Activated CD4-positive, alpha-beta T cell treated with anti-CD3 and anti-CD28 coated beads, Interleukin-2, amount 10 ng/mL, durations not matched to agents 24 days and 14 days (primary cell): ENCODE measurements at regions of chr10 and their contacts with region 1.

Region 1: GRCh38 chr10:3935141-3935540 is 150.1 kb upstream of the KLF6 start:
- DNase-seq: peak; percentile 93
- H3K4me3 Mint-ChIP-seq: peak overlapping the region; percentile 65
- H3K27ac Mint-ChIP-seq: peak overlapping the region; percentile 88
- H3K4me1 Mint-ChIP-seq: peaks cover 59% of the 10 kb centered on the region
- H3K27me3 Mint-ChIP-seq: no peaks in the 10 kb centered on the region

Region 2: DNA sequence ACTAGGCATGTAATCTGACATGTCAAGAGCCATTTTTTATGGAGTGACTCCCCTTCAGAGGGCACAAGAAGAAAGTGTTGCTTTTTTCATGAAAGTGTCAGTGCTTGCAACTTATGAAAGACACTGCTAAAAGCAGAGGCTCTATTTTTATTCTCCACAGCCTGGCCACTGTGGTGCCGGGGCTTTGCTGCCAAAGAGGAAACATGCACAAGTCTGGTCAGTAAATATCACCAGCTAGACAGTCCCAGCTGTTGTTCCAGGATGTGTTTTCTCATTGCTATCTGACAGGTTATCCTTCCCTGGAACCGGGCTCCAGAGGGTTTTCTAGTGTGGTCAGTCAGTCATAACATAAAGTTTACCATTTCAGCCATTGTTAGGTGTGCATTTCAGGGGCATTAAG is 581.9 kb before region 1 on chr10:
- intact Hi-C with region 1: no loop called
- DNase-seq: no peak
- H3K4me3 Mint-ChIP-seq: no peak overlapping the region
- H3K27ac Mint-ChIP-seq: no peak overlapping the region
- H3K4me1 Mint-ChIP-seq: peaks cover 3% of the 10 kb centered on the region
- H3K27me3 Mint-ChIP-seq: peaks cover 33% of the 10 kb centered on the region

Region 3: DNA sequence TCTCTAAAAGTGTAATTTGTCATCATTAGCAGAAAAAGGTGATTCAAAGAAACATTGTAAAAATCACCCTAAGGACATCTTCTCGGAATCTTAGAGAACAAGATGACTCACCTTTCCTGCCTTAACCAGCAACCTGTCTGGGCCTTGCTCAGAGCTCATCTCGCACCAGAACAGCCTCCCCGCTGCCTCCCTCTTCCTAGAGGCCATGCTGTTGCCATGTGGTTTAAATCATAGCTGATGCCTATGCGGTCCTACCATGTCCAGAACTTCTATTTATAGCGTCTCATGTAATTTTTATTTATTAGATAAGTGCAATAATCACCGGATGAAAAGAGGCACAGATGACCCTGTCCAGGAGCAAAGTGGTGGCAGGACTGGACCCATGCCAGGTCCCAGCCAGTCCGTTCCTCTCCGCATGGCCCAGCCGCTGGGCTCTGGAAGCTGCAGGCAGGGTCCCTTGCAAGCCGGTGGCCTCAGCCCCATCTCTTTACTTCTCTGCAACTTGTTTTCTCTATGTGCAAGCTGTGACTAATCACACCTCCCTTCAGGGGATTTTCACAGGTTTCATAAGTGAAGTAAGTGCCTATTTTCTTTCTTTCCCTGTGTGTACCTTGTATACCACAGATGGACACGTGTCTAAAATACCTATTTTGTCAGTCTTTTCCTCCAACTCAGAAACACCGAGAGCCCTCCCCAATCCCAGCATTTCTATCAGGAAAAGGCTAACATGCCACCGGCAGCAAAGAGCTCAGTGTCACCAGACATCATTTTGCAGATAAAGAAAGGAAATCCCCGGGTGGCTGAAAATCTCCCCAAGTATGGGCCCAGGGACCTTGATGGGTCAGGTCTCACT is 177.3 kb before region 1 on chr10:
- intact Hi-C with region 1: loop called (anchors 1 kb)
- DNase-seq: peak; percentile 90
- H3K4me3 Mint-ChIP-seq: peak overlapping the region; percentile 82
- H3K27ac Mint-ChIP-seq: peak overlapping the region; percentile 100
- H3K4me1 Mint-ChIP-seq: peaks cover 71% of the 10 kb centered on the region
- H3K27me3 Mint-ChIP-seq: no peaks in the 10 kb centered on the region

Region 4: GRCh38 chr10:3769556-3769955 is 165.6 kb before region 1 on chr10:
- intact Hi-C with region 1: no loop called
- DNase-seq: no peak
- H3K4me3 Mint-ChIP-seq: no peak overlapping the region
- H3K27ac Mint-ChIP-seq: no peak overlapping the region
- H3K4me1 Mint-ChIP-seq: peaks cover 45% of the 10 kb centered on the region
- H3K27me3 Mint-ChIP-seq: no peaks in the 10 kb centered on the region

Region 5: GRCh38 chr10:3811291-3811870 is 123.8 kb before region 1 on chr10:
- intact Hi-C with region 1: loop called (anchors 1 kb)
- DNase-seq: peak; percentile 90
- H3K4me3 Mint-ChIP-seq: peak overlapping the region; percentile 68
- H3K27ac Mint-ChIP-seq: no peak overlapping the region
- H3K4me1 Mint-ChIP-seq: peaks cover 71% of the 10 kb centered on the region
- H3K27me3 Mint-ChIP-seq: no peaks in the 10 kb centered on the region

Region 6: GRCh38 chr10:3902054-3902808 is 32.9 kb before region 1 on chr10:
- intact Hi-C with region 1: loop called (anchors 1 kb)
- DNase-seq: peak; percentile 79
- H3K4me3 Mint-ChIP-seq: peak overlapping the region; percentile 20
- H3K27ac Mint-ChIP-seq: peak overlapping the region; percentile 87
- H3K4me1 Mint-ChIP-seq: peaks cover 29% of the 10 kb centered on the region
- H3K27me3 Mint-ChIP-seq: no peaks in the 10 kb centered on the region

Region 7: GRCh38 chr10:3980660-3981059 is 45.5 kb after region 1 on chr10:
- intact Hi-C with region 1: loop called (anchors 2 kb)
- DNase-seq: no peak
- H3K4me3 Mint-ChIP-seq: peak overlapping the region; percentile 3
- H3K27ac Mint-ChIP-seq: no peak overlapping the region
- H3K4me1 Mint-ChIP-seq: peaks cover 38% of the 10 kb centered on the region
- H3K27me3 Mint-ChIP-seq: no peaks in the 10 kb centered on the region

Region 8: DNA sequence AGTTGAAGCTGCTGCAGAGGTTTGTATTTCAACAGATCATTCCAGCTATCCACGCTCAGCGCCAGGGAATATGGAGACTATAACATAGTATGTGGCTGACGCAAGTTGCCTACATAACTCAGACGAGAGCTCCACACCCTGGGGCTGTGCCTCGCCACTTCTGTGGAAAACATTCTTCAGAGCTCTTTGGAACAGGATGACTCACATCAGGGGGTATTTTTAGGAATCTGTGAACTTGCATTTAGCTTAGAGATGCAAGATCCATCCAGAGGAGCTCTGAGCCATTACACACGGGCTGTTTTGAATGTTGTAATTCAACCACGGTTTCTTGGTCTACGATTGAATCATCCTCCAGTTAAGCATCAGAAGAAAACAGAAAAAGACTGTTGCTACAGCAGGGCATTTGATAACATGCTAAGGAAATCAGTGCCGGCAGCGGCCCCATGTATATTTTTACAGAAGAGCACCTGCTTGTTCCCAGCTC is 409.4 kb after region 1 on chr10:
- intact Hi-C with region 1: loop called (anchors 10 kb)
- DNase-seq: no peak
- H3K4me3 Mint-ChIP-seq: no peak overlapping the region
- H3K27ac Mint-ChIP-seq: peak overlapping the region; percentile 40
- H3K4me1 Mint-ChIP-seq: peaks cover 19% of the 10 kb centered on the region
- H3K27me3 Mint-ChIP-seq: peaks cover 3% of the 10 kb centered on the region